HEK293 (cell line): ENCODE measurements at regions of chr1 and their contacts with region 1.

Region 1: GRCh38 chr1:36134505-36135329 is 9.7 kb upstream of the COL8A2 start:
- H3K4me3 ChIP-seq: no peak overlapping the region
- H3K27ac ChIP-seq: no peak overlapping the region
- H3K4me1 ChIP-seq: no peaks in the 10 kb centered on the region
- CTCF ChIP-seq: peak; percentile 62

Region 2: GRCh38 chr1:36099681-36100341 is 34.9 kb before region 1 on chr1:
- CTCF ChIA-PET with region 1: interaction called, 156 read pairs
- POLR2A ChIA-PET with region 1: interaction called, 7 read pairs
- H3K4me3 ChIP-seq: no peak overlapping the region
- H3K27ac ChIP-seq: no peak overlapping the region
- H3K4me1 ChIP-seq: no peaks in the 10 kb centered on the region
- CTCF ChIP-seq: peak; percentile 85

Region 3: DNA sequence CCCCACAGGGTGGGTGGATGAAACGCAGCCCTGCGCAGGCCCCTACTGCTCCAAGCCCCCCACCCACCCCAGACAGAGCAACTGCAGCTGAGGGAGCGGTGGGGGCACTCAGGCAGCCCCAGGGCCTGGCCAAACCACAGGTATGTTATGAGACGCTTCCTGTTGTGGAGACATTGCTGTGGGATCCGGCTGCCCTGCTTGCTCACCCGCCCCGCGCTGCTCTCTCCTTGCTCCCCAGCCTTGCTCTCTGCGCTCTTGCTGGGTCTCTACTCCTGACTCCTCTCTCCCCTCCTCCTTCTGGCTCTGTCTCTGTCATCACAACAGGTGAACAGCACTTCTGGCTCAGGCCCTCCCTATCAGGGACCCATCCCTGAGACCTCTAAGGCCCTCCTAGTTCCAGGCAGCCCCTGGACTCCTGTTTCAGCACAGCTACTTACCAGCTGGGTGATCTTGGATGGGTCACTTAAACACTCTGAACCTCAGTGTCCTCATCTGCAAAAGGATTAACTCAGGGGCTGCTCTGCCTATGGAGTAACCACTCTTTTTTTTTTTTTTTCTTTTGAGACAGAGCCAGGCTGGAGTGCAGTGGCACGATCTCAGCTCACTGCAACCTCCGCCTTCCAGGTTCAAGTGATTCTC is 25.6 kb before region 1 on chr1:
- CTCF ChIA-PET with region 1: interaction called, 156 read pairs
- POLR2A ChIA-PET with region 1: interaction called, 9 read pairs
- H3K4me3 ChIP-seq: no peak overlapping the region
- H3K27ac ChIP-seq: no peak overlapping the region
- H3K4me1 ChIP-seq: no peaks in the 10 kb centered on the region
- CTCF ChIP-seq: no peak

Region 4: GRCh38 chr1:36115200-36115669 is 19.5 kb before region 1 on chr1:
- CTCF ChIA-PET with region 1: interaction called, 65 read pairs
- POLR2A ChIA-PET with region 1: interaction called, 9 read pairs
- H3K4me3 ChIP-seq: no peak overlapping the region
- H3K27ac ChIP-seq: no peak overlapping the region
- H3K4me1 ChIP-seq: no peaks in the 10 kb centered on the region
- CTCF ChIP-seq: no peak

Region 5: DNA sequence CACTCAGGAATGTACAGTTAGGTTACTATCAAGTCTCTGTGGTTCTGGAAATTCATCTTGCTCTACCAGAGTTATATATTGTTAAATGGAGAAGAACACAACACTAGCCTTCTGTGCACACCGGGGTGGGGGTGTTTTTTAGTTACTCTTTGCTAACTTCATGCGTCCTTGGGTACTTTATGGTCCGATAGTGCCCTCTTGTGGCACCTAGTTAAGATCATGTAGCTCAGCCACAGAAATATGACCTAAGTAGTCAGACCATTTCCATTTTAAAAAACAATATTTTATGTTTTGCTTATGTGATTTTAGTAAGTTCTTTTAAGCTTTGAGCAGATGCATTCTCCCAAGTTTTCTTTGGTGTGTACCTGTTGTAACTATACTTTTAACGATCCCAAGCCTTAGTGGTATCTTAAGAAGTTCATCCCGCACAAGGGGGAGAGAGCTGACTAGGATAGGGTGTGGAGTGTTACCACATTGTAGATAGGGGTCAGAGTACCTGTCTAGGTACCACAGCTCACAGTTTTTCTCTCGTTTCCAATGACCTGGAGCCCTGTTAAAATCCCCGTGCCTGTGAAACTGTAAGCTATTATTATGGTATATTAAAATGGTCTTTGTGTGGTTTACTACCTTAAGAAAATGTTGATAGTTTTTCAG is 150.9 kb after region 1 on chr1:
- CTCF ChIA-PET with region 1: interaction called, 10 read pairs
- POLR2A ChIA-PET with region 1: no interaction called
- H3K4me3 ChIP-seq: no peak overlapping the region
- H3K27ac ChIP-seq: no peak overlapping the region
- H3K4me1 ChIP-seq: no peaks in the 10 kb centered on the region
- CTCF ChIP-seq: peak; percentile 58; the same call in 1 of the 2 replicates